Activated CD4-positive, alpha-beta memory T cell treated with anti-CD3 and anti-CD28 coated beads for 36 hours (primary cell): ENCODE measurements at regions of chr1 and their contacts with region 1.

Region 1: GRCh38 chr1:179298952-179299351 is 5.4 kb downstream of the SOAT1 start:
- DNase-seq: peak; percentile 74
- H3K4me3 Mint-ChIP-seq: peak overlapping the region; percentile 0
- H3K27ac Mint-ChIP-seq: peak overlapping the region; percentile 65
- H3K4me1 Mint-ChIP-seq: peaks cover 64% of the 10 kb centered on the region
- H3K27me3 Mint-ChIP-seq: no peaks in the 10 kb centered on the region

Region 2: GRCh38 chr1:179278920-179279319 is 20.0 kb before region 1 on chr1:
- CTCF ChIA-PET with region 1: no interaction called
- POLR2A ChIA-PET with region 1: no interaction called
- intact Hi-C with region 1: no loop called
- DNase-seq: no peak
- H3K4me3 Mint-ChIP-seq: no peak overlapping the region
- H3K27ac Mint-ChIP-seq: no peak overlapping the region
- H3K4me1 Mint-ChIP-seq: no peaks in the 10 kb centered on the region
- H3K27me3 Mint-ChIP-seq: no peaks in the 10 kb centered on the region

Region 3: DNA sequence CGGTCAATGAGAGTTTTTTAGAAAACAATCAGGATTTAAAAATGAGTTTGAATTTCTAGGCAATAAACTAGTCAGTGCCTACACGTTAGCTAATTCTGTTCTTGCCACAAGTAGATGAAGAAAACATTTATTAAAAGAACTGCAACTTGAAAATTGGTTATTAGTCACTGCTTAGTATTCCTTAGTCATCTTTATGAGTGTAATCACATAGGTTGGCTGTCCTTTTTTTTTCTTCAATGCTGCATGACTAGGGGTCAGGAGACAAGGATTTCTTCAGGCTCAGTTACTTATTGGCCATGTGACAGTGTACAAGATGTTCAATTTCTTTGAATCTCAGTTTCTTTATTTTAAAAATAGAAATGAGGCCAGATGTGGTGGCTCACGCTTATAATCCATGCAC is 11.8 kb after region 1 on chr1:
- CTCF ChIA-PET with region 1: interaction called, 5 read pairs
- POLR2A ChIA-PET with region 1: interaction called, 3 read pairs
- intact Hi-C with region 1: loop called (anchors 1 kb)
- DNase-seq: no peak
- H3K4me3 Mint-ChIP-seq: no peak overlapping the region
- H3K27ac Mint-ChIP-seq: no peak overlapping the region
- H3K4me1 Mint-ChIP-seq: peaks cover 20% of the 10 kb centered on the region
- H3K27me3 Mint-ChIP-seq: no peaks in the 10 kb centered on the region

Region 4: GRCh38 chr1:179322557-179322956 is 23.6 kb after region 1 on chr1:
- CTCF ChIA-PET with region 1: no interaction called
- POLR2A ChIA-PET with region 1: interaction called, 4 read pairs
- intact Hi-C with region 1: loop called (anchors 1 kb)
- DNase-seq: no peak
- H3K4me3 Mint-ChIP-seq: no peak overlapping the region
- H3K27ac Mint-ChIP-seq: no peak overlapping the region
- H3K4me1 Mint-ChIP-seq: peaks cover 33% of the 10 kb centered on the region
- H3K27me3 Mint-ChIP-seq: no peaks in the 10 kb centered on the region

Region 5: GRCh38 chr1:179353546-179353945 is 54.6 kb after region 1 on chr1:
- CTCF ChIA-PET with region 1: interaction called, 3 read pairs
- POLR2A ChIA-PET with region 1: no interaction called
- intact Hi-C with region 1: loop called (anchors 5 kb)
- DNase-seq: no peak
- H3K4me3 Mint-ChIP-seq: no peak overlapping the region
- H3K27ac Mint-ChIP-seq: no peak overlapping the region
- H3K4me1 Mint-ChIP-seq: peaks cover 14% of the 10 kb centered on the region
- H3K27me3 Mint-ChIP-seq: no peaks in the 10 kb centered on the region